Cardiac septum (tissue), 1 donor: ENCODE measurements at regions of chr10 and their contacts with region 1.

Region 1: DNA sequence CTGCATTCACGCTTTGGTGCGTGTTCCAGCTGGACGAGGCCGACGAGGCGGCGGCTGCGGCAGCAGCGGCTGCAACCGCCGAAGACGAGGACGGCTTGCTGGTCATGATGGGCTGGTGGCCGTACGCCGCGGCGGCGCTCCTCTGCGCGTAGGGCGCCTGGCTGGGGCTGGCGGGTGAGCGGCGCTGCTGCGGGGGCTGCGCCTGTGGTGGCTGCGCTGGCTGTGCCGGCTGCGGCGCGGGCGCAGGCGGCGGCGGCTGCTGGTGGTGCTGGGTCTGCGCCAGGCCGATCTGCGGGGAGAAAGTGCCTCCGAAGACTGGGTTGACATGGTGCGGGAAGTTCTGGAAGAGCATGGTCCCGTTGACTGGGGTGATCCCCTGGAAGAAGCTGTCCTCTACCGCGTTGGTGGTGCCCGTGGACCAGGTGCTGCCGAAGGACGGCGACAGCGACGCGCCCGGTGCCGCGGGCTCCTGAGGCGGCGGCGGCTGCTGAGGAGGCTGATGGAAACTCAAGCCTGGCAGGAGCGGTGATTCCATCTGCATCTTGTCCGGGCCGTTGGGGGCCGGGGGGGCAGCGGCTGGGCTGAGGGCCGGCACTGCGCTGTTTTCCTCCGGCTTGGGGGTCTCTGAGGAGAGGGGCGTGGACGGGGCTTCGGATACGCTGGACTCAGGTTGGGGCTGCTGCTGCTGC is 51.1 kb downstream of the CPEB3 start:
- DNase-seq: peak; percentile 80

Region 2: GRCh38 chr10:92087750-92088395 is 151.9 kb before region 1 on chr10:
- intact Hi-C with region 1: loop called (anchors 10 kb)
- DNase-seq: no peak

Region 3: DNA sequence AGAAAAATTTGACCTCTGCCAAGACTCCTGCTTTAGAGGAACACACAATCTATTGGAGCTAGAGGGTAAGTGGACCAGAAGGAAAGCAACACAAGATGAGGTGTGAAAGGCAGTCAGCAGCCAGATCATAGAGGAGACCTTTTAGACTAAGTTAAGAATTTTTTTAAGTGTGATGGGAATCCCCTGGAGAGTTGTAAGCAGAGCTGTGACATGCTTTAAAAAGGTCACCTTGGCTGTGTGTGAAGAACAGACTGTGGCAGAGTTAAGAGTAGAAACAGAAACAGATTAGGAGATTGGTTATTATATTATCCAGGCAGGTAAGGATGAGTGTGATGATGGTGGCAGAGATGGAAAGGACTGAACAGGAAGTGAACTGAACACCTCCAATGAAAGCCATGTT is 27.6 kb after region 1 on chr10:
- intact Hi-C with region 1: no loop called
- DNase-seq: no peak

Region 4: GRCh38 chr10:92278996-92279696 is 39.4 kb after region 1 on chr10:
- intact Hi-C with region 1: loop called (anchors 5 kb)
- DNase-seq: no peak

Region 5: DNA sequence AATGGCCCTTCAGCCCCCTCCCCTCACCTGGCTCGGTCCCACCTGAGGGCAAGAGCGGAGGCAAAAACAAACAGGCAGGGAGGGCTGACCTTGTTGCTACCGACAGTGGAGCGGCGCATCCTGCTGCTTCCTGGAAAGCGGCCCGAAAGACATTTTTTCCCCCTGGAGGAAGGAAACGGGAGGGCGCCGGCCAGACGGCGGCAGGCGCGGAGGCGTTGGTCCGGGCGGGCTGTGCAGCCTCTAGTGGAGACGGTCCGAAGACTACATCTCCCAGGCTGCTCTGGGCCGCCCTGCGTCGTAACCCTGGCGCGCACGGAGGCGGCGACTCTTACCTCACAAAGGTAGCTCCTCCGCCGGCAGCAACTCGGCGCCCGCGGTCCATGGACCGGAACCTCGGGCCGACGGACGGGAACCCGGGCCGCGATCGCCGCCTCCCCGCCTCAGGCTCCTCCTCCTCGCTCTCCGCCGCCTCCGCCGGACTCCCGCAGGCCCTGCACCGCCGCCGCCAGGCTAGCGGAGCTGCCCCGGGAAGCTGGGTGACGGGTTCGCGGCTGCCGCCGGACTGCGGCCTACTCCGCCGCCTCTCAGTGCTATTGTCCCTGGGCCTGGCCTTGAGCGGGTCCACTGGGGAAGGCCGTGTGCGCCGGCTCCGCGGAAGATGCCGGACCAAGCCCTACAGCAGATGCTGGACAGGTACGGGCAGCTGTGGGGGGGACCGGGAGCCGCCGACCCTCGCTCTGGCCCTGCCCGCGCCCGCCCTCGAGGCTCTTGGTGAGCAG is 51.3 kb after region 1 on chr10 and contains the starts of genes CPEB3 and MARCHF5:
- intact Hi-C with region 1: loop called (anchors 1 kb)
- DNase-seq: peak; percentile 99
- total RNA-seq, gene CPEB3: 8.3 TPM
- total RNA-seq, gene MARCHF5: 32.1 TPM

Region 6: GRCh38 chr10:92305133-92306072 is 65.7 kb after region 1 on chr10:
- intact Hi-C with region 1: no loop called
- DNase-seq: no peak

Region 7: DNA sequence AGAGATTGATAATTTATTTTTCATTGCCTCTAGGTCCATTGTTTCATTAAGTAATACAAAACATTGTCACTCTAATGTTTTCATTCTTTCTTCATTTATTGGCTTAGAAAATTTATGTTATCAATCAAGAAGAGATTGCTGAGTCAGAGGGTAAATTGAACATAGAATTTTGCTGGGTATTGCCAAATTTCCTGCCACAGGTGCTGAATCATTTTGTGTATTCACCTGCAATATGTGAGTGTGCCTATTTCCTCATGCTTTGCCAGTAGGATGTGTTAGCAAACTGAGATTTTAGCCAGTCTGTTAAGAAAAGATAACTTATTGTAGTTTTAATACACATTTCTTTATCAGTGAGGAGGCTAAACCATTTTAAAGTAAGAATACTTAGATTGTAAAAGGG is 89.3 kb after region 1 on chr10:
- intact Hi-C with region 1: no loop called
- DNase-seq: no peak